ENCODE measurements at regions of chr17 and their contacts with region 1.

Region 1: DNA sequence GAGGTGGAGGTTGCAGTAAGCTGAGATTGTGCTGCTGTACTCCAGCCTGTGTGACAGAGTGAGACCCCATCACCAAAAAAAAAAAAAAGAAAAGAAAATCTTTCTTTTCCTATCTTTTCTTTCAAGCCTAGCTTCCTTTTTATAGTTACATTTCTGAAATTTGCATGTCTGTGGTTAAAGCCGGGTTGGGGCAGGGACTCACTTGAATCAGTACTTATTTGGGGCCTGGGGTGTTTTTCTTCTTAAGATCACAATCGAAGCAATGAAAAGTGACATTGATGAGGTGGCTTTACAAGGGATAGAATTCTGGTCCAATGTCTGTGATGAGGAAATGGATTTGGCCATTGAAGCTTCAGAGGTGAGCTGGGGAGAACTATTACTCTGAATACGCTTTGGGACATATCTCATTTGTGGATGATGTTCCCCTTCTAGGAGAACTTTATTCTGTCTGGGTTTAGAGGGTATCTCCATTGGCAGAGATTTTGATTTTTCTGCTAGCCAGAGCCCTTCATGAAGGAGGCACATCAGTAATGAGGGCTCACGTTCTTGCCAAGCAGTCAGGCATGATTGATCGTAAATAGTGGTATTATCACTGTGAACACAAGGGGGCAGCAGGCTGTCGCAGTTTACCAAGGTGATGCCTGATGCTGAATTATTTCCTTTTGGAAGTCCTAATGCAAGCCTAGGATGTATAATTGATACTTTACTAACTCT is 14.3 kb downstream of the KPNB1 start:
- DNase-seq: peak; percentile 73
- ATAC-seq: peak; percentile 65
- H3K4me3 Mint-ChIP-seq: no peak overlapping the region
- H3K27ac Mint-ChIP-seq: peak overlapping the region; percentile 83
- H3K4me1 Mint-ChIP-seq: peaks cover 28% of the 10 kb centered on the region
- H3K27me3 Mint-ChIP-seq: no peaks in the 10 kb centered on the region

Region 2: DNA sequence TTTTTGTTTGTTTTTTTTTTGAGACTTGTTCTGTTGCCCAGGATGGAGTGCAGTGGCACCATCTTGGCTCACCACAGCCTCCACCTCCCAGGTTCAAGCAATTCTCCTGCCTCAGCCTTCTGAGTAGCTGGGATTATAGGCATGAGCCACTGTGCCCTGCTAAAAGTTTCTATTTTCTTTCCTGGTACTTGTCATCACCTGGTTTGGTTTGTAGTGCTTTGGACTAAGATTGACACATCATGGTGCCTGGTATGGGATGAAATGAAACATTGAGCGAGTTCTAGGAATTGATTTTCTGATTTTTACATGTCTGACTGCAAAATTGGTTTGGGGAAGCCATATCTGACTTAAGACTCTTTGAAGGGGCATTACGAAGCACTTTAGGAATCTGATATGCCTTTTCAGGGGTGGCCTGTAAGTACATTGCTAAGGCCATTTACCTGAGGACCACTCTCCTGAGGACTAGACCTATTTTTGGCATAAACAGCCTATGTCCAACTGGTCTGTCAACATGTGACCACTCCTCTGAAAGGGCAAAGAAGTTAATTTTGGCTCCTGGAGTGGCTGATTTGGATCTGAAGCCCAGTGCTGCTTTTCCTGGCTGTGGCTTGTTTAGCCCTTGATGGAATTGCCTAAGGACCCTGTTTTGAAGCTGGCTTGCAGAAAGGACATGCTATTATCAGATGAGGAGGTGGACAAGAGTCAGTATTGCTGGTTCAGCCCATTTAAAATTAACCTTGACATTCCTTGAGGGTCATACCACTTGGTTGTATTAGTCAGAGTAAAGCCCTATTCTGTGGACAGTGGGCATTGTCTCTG is 11.5 kb after region 1 on chr17:
- CTCF ChIA-PET with region 1: interaction called, 68 read pairs
- POLR2A ChIA-PET with region 1: interaction called, 6 read pairs
- intact Hi-C with region 1: no loop called
- DNase-seq: no peak
- ATAC-seq: peak; percentile 43
- H3K4me3 Mint-ChIP-seq: no peak overlapping the region
- H3K27ac Mint-ChIP-seq: peak overlapping the region; percentile 77
- H3K4me1 Mint-ChIP-seq: peaks cover 19% of the 10 kb centered on the region
- H3K27me3 Mint-ChIP-seq: no peaks in the 10 kb centered on the region

Region 3: DNA sequence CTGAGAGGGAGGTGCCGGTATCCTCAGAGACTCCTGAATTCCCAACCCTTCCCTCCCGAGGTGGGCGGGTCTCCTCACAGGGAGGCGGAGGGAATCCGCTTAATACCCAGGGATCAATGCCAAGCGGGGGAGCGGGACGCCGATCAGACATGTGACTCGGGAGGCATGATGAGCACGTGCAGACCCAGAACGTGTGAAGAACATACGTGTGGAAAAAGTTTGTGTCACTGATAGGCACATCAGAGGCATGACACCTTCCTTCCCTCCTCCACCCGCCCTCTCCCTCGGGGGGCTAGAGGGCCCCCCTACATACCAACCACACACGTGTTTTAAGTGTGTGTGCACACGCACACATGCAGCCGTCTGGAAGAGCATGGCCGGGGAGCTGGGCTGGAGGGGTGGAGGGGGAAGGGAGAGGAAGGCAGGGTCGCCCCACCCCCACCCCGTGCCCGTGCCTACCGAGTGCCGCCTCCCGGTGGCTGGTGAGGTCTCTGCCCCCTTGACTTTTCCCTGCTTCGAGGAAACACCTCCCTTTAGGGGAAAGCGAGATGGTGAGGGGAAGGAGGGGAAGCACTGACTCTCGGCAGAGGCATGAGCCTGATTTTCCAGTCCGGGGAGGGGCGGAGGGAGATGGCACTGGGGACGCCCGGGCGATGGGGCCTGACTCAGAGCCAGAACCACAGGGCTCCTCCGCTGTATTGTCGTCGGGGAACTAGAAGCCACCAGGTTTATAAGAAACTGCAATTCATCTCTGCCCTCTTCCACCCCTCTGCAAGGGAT is 56.9 kb after region 1 on chr17:
- CTCF ChIA-PET with region 1: interaction called, 5 read pairs
- POLR2A ChIA-PET with region 1: no interaction called
- intact Hi-C with region 1: loop called in 1 of 2 experiments (anchors 1 kb)
- DNase-seq: peak; percentile 99
- ATAC-seq: peak; percentile 71
- H3K4me3 Mint-ChIP-seq: peak overlapping the region; percentile 69
- H3K27ac Mint-ChIP-seq: peak overlapping the region; percentile 98
- H3K4me1 Mint-ChIP-seq: peaks cover 97% of the 10 kb centered on the region
- H3K27me3 Mint-ChIP-seq: no peaks in the 10 kb centered on the region

Region 4: DNA sequence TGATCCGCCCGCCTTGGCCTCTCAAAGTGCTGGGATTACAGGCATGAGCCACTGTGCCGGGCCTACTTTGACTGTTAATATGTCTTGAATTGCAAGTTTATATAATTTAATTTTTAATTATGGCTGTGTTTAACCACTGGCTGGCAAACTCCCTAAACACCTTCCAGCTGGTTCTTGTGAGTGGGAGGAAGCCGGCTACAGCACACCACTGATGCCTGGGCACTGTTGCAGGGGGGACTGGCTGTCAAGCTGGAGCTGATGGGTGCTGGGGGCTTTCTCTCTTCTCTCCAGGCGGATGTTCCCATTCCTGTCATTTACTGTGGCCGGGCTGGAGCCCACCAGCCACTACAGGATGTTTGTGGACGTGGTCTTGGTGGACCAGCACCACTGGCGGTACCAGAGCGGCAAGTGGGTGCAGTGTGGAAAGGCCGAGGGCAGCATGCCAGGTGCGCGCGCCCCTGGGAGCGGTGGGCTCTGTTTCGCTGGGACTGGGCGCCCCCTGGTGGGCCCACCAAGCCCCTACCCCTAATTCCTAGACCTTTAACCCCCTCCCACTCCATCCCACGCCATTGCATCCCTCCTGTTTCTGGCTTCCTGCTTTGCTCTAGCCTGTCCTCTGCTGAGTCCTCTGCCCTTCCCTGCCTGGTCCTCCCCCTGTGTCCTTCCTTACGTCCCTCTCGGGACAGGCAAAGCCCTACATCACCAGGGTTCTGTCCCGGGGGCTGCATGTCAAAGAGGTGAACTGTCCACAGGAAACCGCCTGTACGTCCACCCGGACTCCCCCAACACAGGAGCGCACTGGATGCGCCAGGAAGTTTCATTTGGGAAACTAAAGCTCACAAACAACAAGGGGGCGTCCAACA is 78.5 kb after region 1 on chr17:
- CTCF ChIA-PET with region 1: interaction called, 8 read pairs
- POLR2A ChIA-PET with region 1: no interaction called
- intact Hi-C with region 1: loop called in 1 of 2 experiments (anchors 2 kb)
- DNase-seq: peak; percentile 67
- ATAC-seq: no peak
- H3K4me3 Mint-ChIP-seq: no peak overlapping the region
- H3K27ac Mint-ChIP-seq: peak overlapping the region; percentile 13
- H3K4me1 Mint-ChIP-seq: peaks cover 44% of the 10 kb centered on the region
- H3K27me3 Mint-ChIP-seq: no peaks in the 10 kb centered on the region

Region 5: GRCh38 chr17:47802341-47803022 is 138.4 kb after region 1 on chr17:
- CTCF ChIA-PET with region 1: interaction called, 3 read pairs
- POLR2A ChIA-PET with region 1: no interaction called
- intact Hi-C with region 1: loop called (anchors 1 to 10 kb)
- DNase-seq: peak; percentile 81
- ATAC-seq: peak; percentile 98
- H3K4me3 Mint-ChIP-seq: no peak overlapping the region
- H3K27ac Mint-ChIP-seq: no peak overlapping the region
- H3K4me1 Mint-ChIP-seq: no peaks in the 10 kb centered on the region
- H3K27me3 Mint-ChIP-seq: peaks cover 2% of the 10 kb centered on the region